Activated T-helper 2 cell treated with anti-CD3 and anti-CD28 coated beads, Interferon-gamma antibody, Interleukin-2, Interleukin-4, amounts not matched to agents 10 μg/mL and 5 μg/mL and 100 μg/mL, durations not matched to agents 14 hours and 24 hours and 36 hours (primary cell): ENCODE measurements at regions of chrX and their contacts with region 1.

Region 1: GRCh38 chrX:81201671-81202455 is at the starts of genes HMGN5 and SH3BGRL:
- DNase-seq: peak; percentile 62
- H3K4me3 Mint-ChIP-seq: peak within 1 kb of the TSS; percentile 100
- H3K27ac Mint-ChIP-seq: peak within 1 kb of the TSS; percentile 99
- H3K4me1 Mint-ChIP-seq: peaks cover 38% of the 10 kb centered on the region
- H3K27me3 Mint-ChIP-seq: no peaks in the 10 kb centered on the region
- total RNA-seq, gene HMGN5: 1.3 and 2.8 TPM in 2 replicates
- total RNA-seq, gene SH3BGRL: 52.8 and 53.0 TPM in 2 replicates

Region 2: DNA sequence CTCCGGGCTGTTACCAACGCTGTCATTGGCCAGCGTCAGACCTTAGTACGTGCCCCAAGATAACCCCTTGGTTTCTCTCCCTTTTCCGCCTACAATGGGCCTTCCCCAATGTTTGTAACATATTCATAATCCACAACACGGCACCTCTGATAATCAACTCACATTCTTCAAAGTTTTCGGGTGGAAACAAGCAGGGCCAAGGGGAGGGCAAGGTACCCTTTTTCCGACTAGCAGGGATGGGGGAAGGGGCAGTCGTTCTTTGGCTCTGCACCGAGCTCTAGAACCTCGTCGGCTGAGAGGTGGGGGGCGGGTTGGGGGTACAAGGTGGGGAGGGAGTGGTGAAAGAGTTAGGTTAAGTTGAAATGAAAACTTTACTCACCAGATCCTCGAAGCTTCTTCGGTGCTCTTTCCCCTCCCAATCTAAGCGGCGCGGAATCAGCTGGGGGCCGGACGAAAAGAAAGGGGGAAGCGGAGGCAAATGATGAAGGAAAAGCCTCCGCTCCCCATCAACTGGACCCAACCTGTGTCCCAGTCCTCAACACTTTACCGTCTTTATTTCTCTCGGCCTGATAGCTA is 393.6 kb before region 1 on chrX:
- intact Hi-C with region 1: loop called (anchors 2 kb)
- DNase-seq: peak; percentile 72
- H3K4me3 Mint-ChIP-seq: peak overlapping the region; percentile 92
- H3K27ac Mint-ChIP-seq: peak overlapping the region; percentile 89
- H3K4me1 Mint-ChIP-seq: peaks cover 21% of the 10 kb centered on the region
- H3K27me3 Mint-ChIP-seq: no peaks in the 10 kb centered on the region

Region 3: DNA sequence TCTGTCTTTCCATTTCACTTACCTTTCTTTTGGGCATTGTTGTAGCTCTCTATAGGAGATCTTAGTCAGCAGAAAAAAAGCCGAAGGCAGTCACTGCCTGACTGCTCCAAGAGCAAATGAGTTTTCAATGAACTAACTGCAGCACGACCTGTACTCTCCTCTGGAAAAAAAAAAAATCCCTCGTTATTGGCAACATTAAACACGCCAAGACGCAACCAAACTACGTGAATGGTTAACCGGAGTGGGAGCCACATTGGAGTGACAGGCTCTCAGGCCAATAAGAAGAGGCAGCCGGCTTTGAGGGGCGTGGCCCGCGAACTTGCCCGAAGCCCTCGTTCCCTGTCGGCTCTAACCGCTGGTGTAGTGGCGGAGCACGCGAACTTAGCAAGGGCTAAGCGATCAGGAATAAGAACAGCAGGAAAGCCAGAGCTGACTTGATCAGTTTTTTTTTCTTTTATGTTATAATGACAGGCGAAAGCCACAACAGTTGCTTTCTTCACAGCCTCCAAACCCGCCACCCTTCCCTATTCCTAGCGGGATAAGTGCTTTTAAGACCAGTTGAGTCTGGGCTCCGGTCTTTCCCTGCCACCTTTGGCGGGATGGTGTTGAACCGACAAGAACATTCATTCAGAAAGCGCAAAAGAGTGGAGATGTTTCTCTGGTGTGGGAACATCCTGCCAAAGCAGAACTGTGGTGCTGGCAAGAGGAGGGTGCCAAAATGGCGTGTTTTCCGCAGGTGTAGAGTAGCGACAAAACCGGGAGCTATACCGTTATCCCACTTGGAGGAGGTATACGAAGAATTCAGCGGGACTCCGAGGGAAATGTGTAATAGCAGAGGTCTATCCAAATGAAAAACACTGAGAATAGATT is 80.1 kb before region 1 on chrX:
- intact Hi-C with region 1: loop called (anchors 1 kb)
- DNase-seq: peak; percentile 84
- H3K4me3 Mint-ChIP-seq: peak overlapping the region; percentile 94
- H3K27ac Mint-ChIP-seq: peak overlapping the region; percentile 90
- H3K4me1 Mint-ChIP-seq: peaks cover 17% of the 10 kb centered on the region
- H3K27me3 Mint-ChIP-seq: peaks cover 12% of the 10 kb centered on the region

Region 4: GRCh38 chrX:81259020-81259713 is 57.3 kb after region 1 on chrX:
- intact Hi-C with region 1: no loop called
- DNase-seq: no peak
- H3K4me3 Mint-ChIP-seq: no peak overlapping the region
- H3K27ac Mint-ChIP-seq: no peak overlapping the region
- H3K4me1 Mint-ChIP-seq: peaks cover 5% of the 10 kb centered on the region
- H3K27me3 Mint-ChIP-seq: no peaks in the 10 kb centered on the region

Region 5: DNA sequence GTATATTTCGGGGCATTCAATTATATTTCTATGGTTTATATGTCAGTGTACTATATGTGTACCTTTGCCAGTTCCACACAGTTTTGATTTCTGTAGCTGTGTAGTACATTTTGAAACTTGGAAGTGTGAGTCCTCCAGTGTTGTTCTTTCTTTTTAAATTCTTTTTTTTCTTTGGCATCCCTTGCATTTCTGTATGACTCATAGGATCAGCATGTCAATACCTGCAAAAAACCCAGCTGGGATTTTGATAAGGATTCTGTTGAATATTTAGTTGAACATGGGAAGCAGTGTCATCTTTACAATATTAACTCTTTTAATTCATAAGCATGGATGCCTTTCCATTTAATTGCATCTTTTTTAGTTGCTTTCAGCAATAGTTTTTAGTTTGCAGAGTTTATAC is 100.0 kb after region 1 on chrX:
- intact Hi-C with region 1: no loop called
- DNase-seq: no peak
- H3K4me3 Mint-ChIP-seq: no peak overlapping the region
- H3K27ac Mint-ChIP-seq: no peak overlapping the region
- H3K4me1 Mint-ChIP-seq: no peaks in the 10 kb centered on the region
- H3K27me3 Mint-ChIP-seq: no peaks in the 10 kb centered on the region